Testis (tissue), 5 donors: ENCODE measurements at regions of chr5 and their contacts with region 1.

Region 1: GRCh38 chr5:170010269-170010994 is 30.1 kb upstream of the INSYN2B start:
- DNase-seq: no peak
- H3K4me3 ChIP-seq: no peak overlapping the region
- H3K27ac ChIP-seq: no peak overlapping the region
- H3K4me1 ChIP-seq: no peaks in the 10 kb centered on the region
- H3K27me3 ChIP-seq: no peaks in the 10 kb centered on the region
- CTCF ChIP-seq: no peak
- POLR2A ChIP-seq: no peak

Region 2: DNA sequence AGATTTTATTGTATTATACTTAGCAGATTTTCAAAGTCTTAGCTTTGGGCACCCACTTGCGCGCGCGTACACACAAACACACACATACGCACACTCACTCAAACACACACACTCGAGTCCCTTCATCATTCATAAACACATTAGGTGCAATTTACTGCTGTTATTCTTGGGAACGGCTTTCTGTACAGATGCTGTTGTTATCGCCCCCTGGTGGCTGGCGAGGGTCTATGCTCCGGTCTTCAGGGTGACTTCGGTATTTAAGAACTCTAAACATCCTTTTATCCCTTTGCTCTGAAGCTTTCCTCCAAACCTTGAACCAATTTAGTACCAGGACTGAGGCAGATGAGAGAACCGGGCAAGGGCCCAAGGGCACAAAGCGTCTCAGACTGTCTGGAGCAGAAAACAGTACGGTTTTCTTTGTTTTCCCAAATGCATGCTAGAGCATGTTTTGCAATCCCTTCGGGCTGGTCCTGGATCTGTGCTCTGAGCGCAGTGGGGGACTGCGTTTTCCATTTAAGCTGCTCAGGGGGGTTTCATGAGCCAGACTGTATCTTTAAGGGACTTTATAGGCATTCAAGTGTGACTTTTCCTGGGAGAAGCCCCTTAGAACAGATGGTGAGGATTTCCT is 707.8 kb before region 1 on chr5:
- intact Hi-C with region 1: no loop called
- DNase-seq: peak; percentile 85
- H3K4me3 ChIP-seq: no peak overlapping the region
- H3K27ac ChIP-seq: no peak overlapping the region
- H3K4me1 ChIP-seq: no peaks in the 10 kb centered on the region
- H3K27me3 ChIP-seq: no peaks in the 10 kb centered on the region
- CTCF ChIP-seq: peak; percentile 81 to 98 (median 83)
- POLR2A ChIP-seq: no peak

Region 3: GRCh38 chr5:171242521-171242920 is 1232.1 kb after region 1 on chr5:
- intact Hi-C with region 1: loop called (anchors 10 kb)
- DNase-seq: no peak
- H3K4me3 ChIP-seq: no peak overlapping the region
- H3K27ac ChIP-seq: no peak overlapping the region
- H3K4me1 ChIP-seq: no peaks in the 10 kb centered on the region
- H3K27me3 ChIP-seq: no peaks in the 10 kb centered on the region
- CTCF ChIP-seq: no peak
- POLR2A ChIP-seq: no peak

Region 4: GRCh38 chr5:171462928-171463862 is 1452.8 kb after region 1 on chr5:
- intact Hi-C with region 1: no loop called
- DNase-seq: no peak
- H3K4me3 ChIP-seq: no peak overlapping the region
- H3K27ac ChIP-seq: no peak overlapping the region
- H3K4me1 ChIP-seq: no peaks in the 10 kb centered on the region
- H3K27me3 ChIP-seq: no peaks in the 10 kb centered on the region
- CTCF ChIP-seq: no peak
- POLR2A ChIP-seq: no peak